BJ (cell line): ENCODE measurements at regions of chr11 and their contacts with region 1.

Region 1: DNA sequence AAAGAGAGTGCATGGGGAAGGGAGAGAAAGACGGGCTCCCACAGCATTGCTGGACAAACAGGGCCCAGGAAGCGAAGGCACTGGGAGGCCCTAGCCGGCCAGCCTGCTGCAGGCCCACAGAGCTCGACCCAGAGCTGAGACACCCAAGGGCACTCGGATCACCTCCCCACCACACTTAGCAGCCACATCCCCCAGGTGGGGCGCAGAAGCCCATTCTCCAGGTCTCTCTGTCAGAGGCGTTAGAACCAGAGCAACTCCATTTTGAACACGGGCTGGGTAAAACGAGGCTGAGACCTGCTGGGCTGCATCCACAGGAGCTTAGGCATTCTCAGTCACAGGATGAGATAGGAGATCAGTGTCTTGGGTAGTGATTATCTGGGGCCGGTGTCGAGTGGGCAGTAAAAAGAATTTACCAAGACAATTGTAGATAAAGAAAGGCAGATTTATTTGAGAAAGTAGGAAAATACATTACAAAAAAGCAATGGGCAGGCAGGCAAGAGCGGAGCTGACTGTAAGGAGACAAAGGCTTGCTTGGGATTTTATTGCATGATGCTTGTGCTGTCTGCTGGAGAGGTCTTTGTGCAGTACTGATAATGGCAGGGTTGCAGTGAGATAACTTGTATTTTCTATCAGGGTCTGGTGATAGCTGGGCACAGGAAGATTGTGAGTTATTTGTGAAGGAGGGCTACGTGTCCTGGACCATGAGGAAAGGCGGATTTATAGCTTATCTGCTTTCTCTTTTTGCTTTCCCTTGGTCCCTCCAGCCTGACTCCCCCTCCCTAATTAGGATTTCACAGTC is 13.4 kb upstream of the CAPN5 start:
- DNase-seq: no peak
- H3K4me3 ChIP-seq: no peak overlapping the region
- H3K27me3 ChIP-seq: peaks cover 2% of the 10 kb centered on the region
- CTCF ChIP-seq: no peak

Region 2: DNA sequence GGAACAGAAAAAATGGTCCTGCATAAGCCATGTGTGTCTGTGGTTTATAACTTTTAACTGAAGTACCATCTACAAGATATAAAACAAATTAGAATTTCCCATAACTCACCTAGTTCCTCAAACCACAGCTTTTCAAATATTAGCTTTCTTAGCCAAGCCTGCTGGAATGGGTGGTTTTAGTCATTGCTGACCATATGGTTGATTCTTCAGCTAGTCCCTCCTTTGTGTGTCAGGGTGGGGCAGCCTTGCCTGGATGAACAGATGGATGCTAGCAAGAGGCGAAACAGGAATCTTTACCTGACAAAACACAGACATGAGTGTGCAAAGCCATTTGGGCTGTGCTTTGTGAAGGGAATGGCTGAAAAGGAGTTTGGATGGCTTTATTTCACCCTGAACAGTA is 26.1 kb before region 1 on chr11:
- CTCF ChIA-PET with region 1: no interaction called
- POLR2A ChIA-PET with region 1: no interaction called
- DNase-seq: peak; percentile 46
- H3K4me3 ChIP-seq: no peak overlapping the region
- H3K27me3 ChIP-seq: peaks cover 2% of the 10 kb centered on the region; the same call in 1 of the 2 replicates
- CTCF ChIP-seq: no peak

Region 3: GRCh38 chr11:77066229-77067042 is 13.0 kb after region 1 on chr11 and contains the start of gene CAPN5:
- CTCF ChIA-PET with region 1: interaction called, 24 read pairs
- POLR2A ChIA-PET with region 1: no interaction called
- DNase-seq: peak; percentile 57
- H3K4me3 ChIP-seq: peak within 1 kb of the TSS; percentile 75
- H3K27me3 ChIP-seq: no peaks in the 10 kb centered on the region
- CTCF ChIP-seq: peak; percentile 53
- polyA plus RNA-seq, gene CAPN5: 11.3 and 18.4 TPM in 2 replicates